Endothelial cell of umbilical vein (primary cell): ENCODE measurements at regions of chr5 and their contacts with region 1.

Region 1: GRCh38 chr5:129767906-129768380 is 20.0 kb downstream of the MINAR2 start:
- DNase-seq: peak; percentile 87
- H3K4me3 ChIP-seq: no peak overlapping the region
- H3K27ac ChIP-seq: no peak overlapping the region
- H3K4me1 ChIP-seq: no peaks in the 10 kb centered on the region
- H3K27me3 ChIP-seq: peaks cover 1 to 5% of the 10 kb centered on the region in 2 experiments
- CTCF ChIP-seq: peak; percentile 86 to 96
- POLR2A ChIP-seq: no peak

Region 2: DNA sequence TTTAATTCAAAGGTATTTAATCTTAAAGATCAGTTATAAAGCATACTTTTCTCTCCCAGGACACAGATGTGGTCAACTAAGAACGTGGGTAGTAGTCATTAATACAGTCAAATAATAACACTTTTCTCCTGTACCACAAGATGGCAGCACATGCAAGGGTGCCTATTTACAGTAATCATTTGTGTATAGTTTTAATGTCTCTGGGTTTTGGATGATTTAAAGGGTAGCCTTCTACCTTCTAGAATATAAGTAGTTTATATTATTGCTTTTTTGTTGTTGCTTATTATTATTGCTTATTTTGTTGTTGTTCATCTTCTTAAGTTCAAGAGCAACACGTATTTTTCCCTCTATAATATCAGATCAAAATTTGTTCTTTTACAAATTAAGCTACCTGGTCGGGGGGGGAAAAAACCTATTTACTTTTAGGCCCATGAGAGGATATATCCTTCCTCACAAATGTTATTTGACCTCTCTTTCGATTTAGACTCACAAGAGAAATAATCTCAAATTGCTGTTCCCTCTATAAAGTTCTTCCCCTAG is 862.3 kb before region 1 on chr5:
- CTCF ChIA-PET with region 1: interaction called, 29 read pairs
- POLR2A ChIA-PET with region 1: no interaction called
- dilution Hi-C with region 1: no loop called
- intact Hi-C with region 1: loop called (anchors 1 kb)
- DNase-seq: peak; percentile 68
- H3K4me3 ChIP-seq: no peak overlapping the region
- H3K27ac ChIP-seq: no peak overlapping the region
- H3K4me1 ChIP-seq: no peaks in the 10 kb centered on the region
- H3K27me3 ChIP-seq: no peaks in the 10 kb centered on the region
- CTCF ChIP-seq: peak; percentile 49 to 51
- POLR2A ChIP-seq: no peak

Region 3: GRCh38 chr5:129361440-129362025 is 406.4 kb before region 1 on chr5:
- CTCF ChIA-PET with region 1: interaction called, 5 read pairs
- POLR2A ChIA-PET with region 1: no interaction called
- dilution Hi-C with region 1: no loop called
- intact Hi-C with region 1: loop called (anchors 1 kb)
- DNase-seq: peak; percentile 30
- H3K4me3 ChIP-seq: no peak overlapping the region
- H3K27ac ChIP-seq: no peak overlapping the region
- H3K4me1 ChIP-seq: no peaks in the 10 kb centered on the region
- H3K27me3 ChIP-seq: no peaks in the 10 kb centered on the region
- CTCF ChIP-seq: peak; percentile 11 to 30
- POLR2A ChIP-seq: no peak

Region 4: GRCh38 chr5:129541644-129542251 is 226.2 kb before region 1 on chr5:
- CTCF ChIA-PET with region 1: interaction called, 4 read pairs
- POLR2A ChIA-PET with region 1: no interaction called
- dilution Hi-C with region 1: no loop called
- intact Hi-C with region 1: loop called (anchors 2 kb)
- DNase-seq: peak; percentile 18
- H3K4me3 ChIP-seq: no peak overlapping the region
- H3K27ac ChIP-seq: no peak overlapping the region
- H3K4me1 ChIP-seq: no peaks in the 10 kb centered on the region
- H3K27me3 ChIP-seq: no peaks in the 10 kb centered on the region
- CTCF ChIP-seq: peak in 1 of 2 donors; percentile 22
- POLR2A ChIP-seq: no peak

Region 5: DNA sequence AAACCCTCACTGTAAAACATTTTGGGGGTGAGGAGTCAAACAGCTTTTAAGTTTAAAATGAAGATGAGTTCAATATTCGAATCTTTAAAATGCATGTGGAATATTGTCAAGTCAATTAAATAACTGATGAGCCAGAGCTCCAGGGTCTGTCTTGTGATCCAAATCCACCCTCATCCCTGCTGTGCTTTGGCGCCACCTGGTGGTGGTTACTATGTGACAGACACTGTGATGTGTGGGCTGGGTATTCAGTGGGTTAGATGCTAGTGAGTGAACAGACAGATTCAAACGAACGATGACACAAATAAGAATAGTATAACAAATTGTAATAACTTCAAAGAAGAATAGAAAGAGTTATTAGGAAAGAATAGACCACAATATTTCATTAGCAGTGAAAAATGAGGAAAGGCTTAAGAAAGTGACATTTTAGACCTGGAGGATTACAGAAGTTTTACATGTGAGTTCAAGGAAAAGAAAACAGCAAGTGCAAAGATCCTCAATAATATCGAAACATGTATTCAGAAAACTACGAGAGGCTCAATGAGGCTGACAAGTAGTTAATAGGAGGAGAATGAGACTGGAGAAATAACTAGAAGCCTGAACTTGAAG is 84.9 kb after region 1 on chr5:
- CTCF ChIA-PET with region 1: interaction called, 223 read pairs
- POLR2A ChIA-PET with region 1: no interaction called
- dilution Hi-C with region 1: no loop called
- intact Hi-C with region 1: loop called (anchors 1 kb)
- DNase-seq: peak; percentile 76
- H3K4me3 ChIP-seq: no peak overlapping the region
- H3K27ac ChIP-seq: no peak overlapping the region
- H3K4me1 ChIP-seq: peaks cover 10% of the 10 kb centered on the region
- H3K27me3 ChIP-seq: peaks cover 0 to 3% of the 10 kb centered on the region in 2 experiments
- CTCF ChIP-seq: peak; percentile 84 to 93
- POLR2A ChIP-seq: no peak

Region 6: DNA sequence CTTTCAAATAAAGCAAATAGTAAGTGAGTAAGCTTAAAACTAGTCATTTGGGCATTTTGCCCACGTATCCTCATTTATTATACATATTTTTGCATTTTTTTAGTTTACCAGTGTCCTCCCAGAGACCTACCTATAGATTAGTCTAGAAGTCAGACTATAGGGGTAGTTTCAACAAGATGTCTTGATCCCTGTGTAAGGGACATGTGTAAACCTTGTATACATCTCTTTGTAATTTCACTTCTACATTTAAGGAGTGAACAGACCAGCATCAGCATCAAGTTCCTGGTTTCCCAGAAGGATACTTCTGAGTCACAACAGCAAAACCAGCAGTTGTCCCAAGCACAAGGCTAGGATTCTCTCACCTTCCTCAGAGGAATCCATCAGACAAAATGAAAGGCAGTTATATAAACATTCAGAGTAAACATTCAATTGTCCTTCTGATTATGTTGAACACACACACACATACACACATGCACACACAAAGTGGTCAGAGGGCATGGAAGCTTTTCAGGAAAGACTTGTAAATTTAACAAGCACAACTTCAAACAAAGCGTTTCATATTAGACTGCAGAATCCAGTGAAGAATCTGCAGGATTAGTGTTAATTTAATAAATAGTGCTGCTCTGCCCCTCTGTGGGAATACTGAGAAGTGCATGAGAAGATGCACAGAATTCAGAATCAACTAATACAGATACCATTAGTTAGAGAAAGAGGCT is 1341.8 kb after region 1 on chr5:
- CTCF ChIA-PET with region 1: interaction called, 38 read pairs
- POLR2A ChIA-PET with region 1: no interaction called
- dilution Hi-C with region 1: no loop called
- intact Hi-C with region 1: loop called (anchors 1 kb)
- DNase-seq: peak; percentile 52
- H3K4me3 ChIP-seq: no peak overlapping the region
- H3K27ac ChIP-seq: no peak overlapping the region
- H3K4me1 ChIP-seq: no peaks in the 10 kb centered on the region
- H3K27me3 ChIP-seq: peaks cover 0 to 2% of the 10 kb centered on the region in 2 experiments
- CTCF ChIP-seq: peak; percentile 40 to 57
- POLR2A ChIP-seq: no peak